Activated T-helper 2 cell treated with anti-CD3 and anti-CD28 coated beads, Interferon-gamma antibody, Interleukin-2, Interleukin-4, amounts not matched to agents 10 μg/mL and 5 μg/mL and 100 μg/mL, durations not matched to agents 14 hours and 24 hours and 36 hours (primary cell): ENCODE measurements at regions of chr7 and their contacts with region 1.

Region 1: DNA sequence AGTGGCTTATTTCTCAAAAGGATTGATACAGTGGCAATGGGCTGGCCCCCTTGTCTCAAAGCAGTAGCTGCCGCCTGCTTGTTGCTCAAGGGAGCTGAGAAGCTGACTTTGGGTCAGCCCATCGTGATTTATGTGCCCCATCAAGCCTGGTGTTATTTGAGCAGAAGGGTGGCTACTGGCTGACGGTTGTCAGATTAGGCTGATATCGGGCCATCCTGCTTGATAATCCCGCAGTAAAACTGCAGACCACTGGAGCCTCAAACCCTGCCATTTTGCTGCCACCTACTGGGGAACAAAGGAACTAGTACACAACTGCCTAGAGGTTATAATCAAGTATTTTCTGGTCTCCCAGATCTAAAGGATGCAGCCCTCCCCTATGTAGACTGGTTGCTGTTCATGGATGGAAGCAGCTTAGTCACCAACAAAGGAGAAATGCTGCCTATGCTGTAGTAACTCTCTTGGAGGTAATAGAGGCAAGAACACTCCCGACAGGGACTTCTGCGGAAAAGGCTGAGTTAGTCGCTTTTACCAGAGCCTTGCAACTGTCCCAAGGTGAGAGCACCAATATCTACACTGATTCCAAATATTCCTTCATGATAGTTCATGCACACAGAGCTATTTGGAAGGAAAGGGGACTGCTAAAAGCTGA is 65.9 kb upstream of the ZNF92 start:
- DNase-seq: peak; percentile 18
- H3K4me3 Mint-ChIP-seq: no peak overlapping the region
- H3K27ac Mint-ChIP-seq: no peak overlapping the region
- H3K4me1 Mint-ChIP-seq: no peaks in the 10 kb centered on the region
- H3K27me3 Mint-ChIP-seq: no peaks in the 10 kb centered on the region

Region 2: GRCh38 chr7:64951250-64951848 is 356.4 kb before region 1 on chr7:
- intact Hi-C with region 1: loop called (anchors 1 kb)
- DNase-seq: no peak
- H3K4me3 Mint-ChIP-seq: no peak overlapping the region
- H3K27ac Mint-ChIP-seq: no peak overlapping the region
- H3K4me1 Mint-ChIP-seq: no peaks in the 10 kb centered on the region
- H3K27me3 Mint-ChIP-seq: peaks cover 21% of the 10 kb centered on the region